Heart left ventricle (tissue), 16 donors: ENCODE measurements at regions of chr17 and their contacts with region 1.

Region 1: GRCh38 chr17:17568749-17569195 is 22.7 kb downstream of the PEMT start:
- DNase-seq: peak; percentile 70 to 88 (median 83)
- ATAC-seq: peak in 2 of 4 donors; percentile 48 to 57
- H3K4me3 ChIP-seq: no peak overlapping the region
- H3K27ac ChIP-seq: peak overlapping the region in 8 of 12 donors; percentile 29 to 99 (median 88)
- H3K4me1 ChIP-seq: peaks cover 3 to 72% (median 51%) of the 10 kb centered on the region in 12 donors
- H3K27me3 ChIP-seq: no peaks in the 10 kb centered on the region
- CTCF ChIP-seq: peak; percentile 50 to 78 (median 65)
- POLR2A ChIP-seq: no peak

Region 2: DNA sequence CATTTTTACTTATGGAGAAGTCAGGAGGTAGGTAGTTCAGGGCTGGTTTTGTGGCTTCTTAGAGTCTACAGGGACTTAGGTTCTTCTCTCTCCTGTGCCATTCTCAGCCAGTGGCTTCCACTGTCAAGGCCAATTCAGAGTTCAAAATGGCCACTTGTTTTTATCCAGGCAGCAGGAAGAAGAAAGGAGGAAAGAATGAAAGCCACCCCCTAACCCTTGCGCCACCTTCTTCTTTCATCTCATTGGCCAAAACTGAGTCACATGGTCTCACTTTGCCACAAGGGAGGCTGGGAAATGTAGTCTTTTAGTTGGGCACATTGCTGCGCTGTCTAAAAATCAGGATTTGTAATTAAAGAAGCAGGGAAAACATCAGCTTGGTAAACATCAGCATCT is 152.8 kb before region 1 on chr17:
- intact Hi-C with region 1: loop called in 2 of 10 experiments (anchors 5 kb)
- DNase-seq: no peak
- ATAC-seq: peak in 2 of 4 donors; percentile 16 to 41
- H3K4me3 ChIP-seq: no peak overlapping the region
- H3K27ac ChIP-seq: peak overlapping the region; percentile 19 to 82 (median 74)
- H3K4me1 ChIP-seq: peaks cover 0 to 63% (median 33%) of the 10 kb centered on the region in 12 donors
- H3K27me3 ChIP-seq: no peaks in the 10 kb centered on the region
- CTCF ChIP-seq: no peak
- POLR2A ChIP-seq: no peak

Region 3: GRCh38 chr17:17526369-17526768 is 42.4 kb before region 1 on chr17:
- intact Hi-C with region 1: loop called in 1 of 10 experiments (anchors 5 kb)
- DNase-seq: peak; percentile 48 to 86 (median 66)
- ATAC-seq: peak; percentile 86 to 92 (median 90)
- H3K4me3 ChIP-seq: no peak overlapping the region
- H3K27ac ChIP-seq: peak overlapping the region in 11 of 12 donors; percentile 30 to 85 (median 73)
- H3K4me1 ChIP-seq: peaks cover 0 to 41% (median 14%) of the 10 kb centered on the region in 12 donors
- H3K27me3 ChIP-seq: no peaks in the 10 kb centered on the region
- CTCF ChIP-seq: no peak
- POLR2A ChIP-seq: no peak

Region 4: DNA sequence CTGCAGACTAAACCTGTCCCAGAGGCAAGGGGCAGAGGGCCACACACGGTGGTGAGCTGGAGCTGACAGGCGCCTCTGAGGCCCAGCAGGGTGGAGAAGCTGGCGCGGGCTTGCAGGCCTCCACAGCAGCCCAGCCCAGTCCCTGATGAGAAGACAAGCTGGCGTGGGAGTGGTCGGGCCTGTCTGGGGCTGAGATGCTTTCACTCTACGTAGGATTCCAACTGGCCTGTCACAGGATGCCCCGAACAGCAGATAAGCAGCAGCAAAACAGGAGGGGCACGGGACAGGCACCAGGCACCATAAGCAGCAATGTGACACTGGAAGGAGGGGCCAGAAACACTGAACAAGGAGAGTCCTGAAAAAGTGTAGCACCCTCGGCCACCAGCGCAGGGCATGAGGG is 17.4 kb before region 1 on chr17:
- intact Hi-C with region 1: loop called in 1 of 10 experiments (anchors 1 kb)
- DNase-seq: peak; percentile 69 to 88 (median 82)
- ATAC-seq: peak; percentile 79 to 90 (median 84)
- H3K4me3 ChIP-seq: no peak overlapping the region
- H3K27ac ChIP-seq: peak overlapping the region; percentile 59 to 90 (median 81)
- H3K4me1 ChIP-seq: peaks cover 0 to 69% (median 31%) of the 10 kb centered on the region in 12 donors
- H3K27me3 ChIP-seq: no peaks in the 10 kb centered on the region
- CTCF ChIP-seq: no peak
- POLR2A ChIP-seq: peak in 1 of 2 donors; percentile 29

Region 5: GRCh38 chr17:17641621-17642409 is 73.0 kb after region 1 on chr17:
- intact Hi-C with region 1: loop called in 1 of 10 experiments (anchors 5 kb)
- DNase-seq: peak; percentile 70 to 85 (median 76)
- ATAC-seq: peak; percentile 69 to 91 (median 90)
- H3K4me3 ChIP-seq: no peak overlapping the region
- H3K27ac ChIP-seq: peak overlapping the region in 1 of 12 donors; percentile 23
- H3K4me1 ChIP-seq: peaks cover 0 to 13% (median 0%) of the 10 kb centered on the region in 12 donors
- H3K27me3 ChIP-seq: no peaks in the 10 kb centered on the region
- CTCF ChIP-seq: peak; percentile 80 to 94 (median 88)
- POLR2A ChIP-seq: no peak